ENCODE measurements at regions of chr20 and their contacts with region 1.

Region 1: DNA sequence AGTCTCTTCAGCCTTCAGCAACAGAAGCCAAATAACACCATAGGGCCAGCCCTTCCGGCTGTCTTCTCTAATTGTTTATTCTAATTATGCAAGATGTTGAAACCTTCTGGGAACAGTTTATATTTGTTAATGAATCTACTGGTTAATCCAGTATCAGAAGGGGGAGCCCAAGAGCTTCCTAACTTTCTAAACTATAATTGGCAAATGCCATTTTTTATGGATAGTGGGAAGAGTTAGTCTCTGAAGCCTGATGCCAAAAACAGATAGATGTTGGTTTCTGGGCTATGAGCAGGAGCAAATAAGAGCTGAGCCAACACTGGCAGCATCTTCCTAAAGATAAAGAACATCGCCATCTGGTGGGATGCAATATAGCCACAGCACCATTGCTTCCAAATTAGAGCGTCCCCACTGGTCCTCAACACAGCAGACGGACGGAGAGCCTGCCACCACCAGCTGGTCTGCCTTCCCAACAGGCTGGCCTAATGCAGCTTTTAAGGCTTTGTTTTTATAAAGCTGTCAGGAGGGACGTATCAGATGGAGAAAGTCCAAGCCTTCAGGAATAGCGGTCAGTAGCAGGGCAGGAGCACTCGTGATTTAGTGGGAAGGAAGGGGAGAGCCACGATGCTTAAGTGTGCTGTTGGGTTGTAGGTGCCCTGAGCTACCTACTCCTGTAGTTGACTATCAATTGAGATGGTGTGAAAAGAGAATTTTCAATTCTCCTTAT is 118.8 kb downstream of the RALGAPA2 start:
- DNase-seq: no peak
- H3K4me3 ChIP-seq: no peak overlapping the region
- H3K27me3 ChIP-seq: no peaks in the 10 kb centered on the region
- CTCF ChIP-seq: peak; percentile 57

Region 2: DNA sequence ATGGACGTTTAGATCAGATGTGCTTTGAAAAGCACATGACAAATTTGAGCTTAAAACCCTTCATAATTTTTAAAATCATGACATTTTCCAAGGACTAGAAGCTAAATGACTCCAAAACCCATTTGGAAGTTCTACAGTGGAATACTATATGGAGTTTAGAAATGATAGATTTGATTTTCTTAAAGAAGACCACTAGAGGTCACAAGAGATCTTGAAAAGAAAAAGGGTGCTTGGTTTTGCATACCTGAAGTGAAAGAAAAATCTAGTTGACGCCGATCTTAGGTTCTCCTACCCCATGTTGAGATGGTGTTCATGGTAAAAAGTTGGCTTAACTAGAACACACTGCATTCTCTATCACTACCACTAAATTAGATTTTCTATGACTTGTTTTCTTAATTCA is 509.8 kb before region 1 on chr20:
- CTCF ChIA-PET with region 1: interaction called, 14 read pairs
- POLR2A ChIA-PET with region 1: no interaction called
- DNase-seq: no peak
- H3K4me3 ChIP-seq: no peak overlapping the region
- H3K27me3 ChIP-seq: peaks cover 6% of the 10 kb centered on the region
- CTCF ChIP-seq: peak; percentile 45

Region 3: DNA sequence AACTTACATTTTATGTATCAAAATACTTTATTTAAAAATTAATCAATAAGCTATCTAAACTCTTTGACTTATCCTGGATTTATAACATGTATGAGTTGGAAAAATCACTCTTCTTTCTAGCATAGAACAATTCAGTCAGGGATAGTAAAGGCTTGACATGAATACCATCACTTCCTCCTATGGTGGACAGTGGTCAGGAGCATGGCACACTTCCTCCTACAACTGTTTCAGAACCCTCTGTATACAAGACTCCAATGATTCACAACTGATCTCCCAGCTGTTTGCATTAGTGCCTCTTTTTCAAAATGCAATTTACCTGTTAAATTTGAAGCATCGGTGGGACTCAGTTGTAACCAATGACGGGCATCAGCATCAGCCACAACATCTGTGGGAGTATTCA is 10.9 kb before region 1 on chr20:
- CTCF ChIA-PET with region 1: interaction called, 65 read pairs
- POLR2A ChIA-PET with region 1: no interaction called
- DNase-seq: no peak
- H3K4me3 ChIP-seq: no peak overlapping the region
- H3K27me3 ChIP-seq: no peaks in the 10 kb centered on the region
- CTCF ChIP-seq: no peak

Region 4: DNA sequence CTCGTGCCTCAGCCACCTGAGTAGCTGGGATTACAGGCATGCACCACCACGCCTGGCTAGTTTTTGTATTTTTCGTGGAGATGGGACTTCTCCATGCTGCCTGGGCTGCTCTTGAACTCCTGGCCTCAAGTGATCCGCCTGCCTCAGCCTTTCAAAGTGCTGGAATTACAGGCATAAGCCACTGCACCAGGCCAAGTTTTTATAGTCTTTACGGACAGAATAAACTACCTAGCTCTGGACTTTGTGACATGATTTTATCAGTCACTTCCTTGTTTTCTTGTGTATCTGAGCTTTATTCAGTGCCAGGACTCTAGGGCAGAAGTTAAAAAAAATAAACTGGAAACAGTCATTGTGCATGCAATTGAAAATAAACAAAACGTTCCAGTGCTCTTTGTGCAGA is 165.5 kb after region 1 on chr20:
- CTCF ChIA-PET with region 1: no interaction called
- POLR2A ChIA-PET with region 1: interaction called, 12 read pairs
- DNase-seq: no peak
- H3K4me3 ChIP-seq: no peak overlapping the region
- H3K27me3 ChIP-seq: no peaks in the 10 kb centered on the region
- CTCF ChIP-seq: no peak

Measured in BJ (cell line).